ENCODE measurements at regions of chr6 and their contacts with region 1.

Region 1: GRCh38 chr6:24774696-24775519 is at the start of gene GMNN:
- DNase-seq: peak; percentile 94
- H3K4me3 ChIP-seq: peak within 1 kb of the TSS; percentile 41 to 99 (median 82)
- H3K27ac ChIP-seq: peak within 1 kb of the TSS; percentile 54
- H3K4me1 ChIP-seq: peaks cover 23% of the 10 kb centered on the region
- H3K27me3 ChIP-seq: no peaks in the 10 kb centered on the region
- CTCF ChIP-seq: no peak
- POLR2A ChIP-seq: peak; percentile 85
- total RNA-seq, gene GMNN: 51.9 and 52.6 TPM in 2 replicates

Region 2: GRCh38 chr6:24504602-24505586 is 270.0 kb before region 1 on chr6:
- CTCF ChIA-PET with region 1: no interaction called
- POLR2A ChIA-PET with region 1: no interaction called
- dilution Hi-C with region 1: no loop called
- intact Hi-C with region 1: no loop called
- DNase-seq: no peak
- H3K4me3 ChIP-seq: no peak overlapping the region
- H3K27ac ChIP-seq: no peak overlapping the region
- H3K4me1 ChIP-seq: no peaks in the 10 kb centered on the region
- H3K27me3 ChIP-seq: peaks cover 0 to 2% of the 10 kb centered on the region in 2 experiments
- CTCF ChIP-seq: no peak
- POLR2A ChIP-seq: no peak

Region 3: DNA sequence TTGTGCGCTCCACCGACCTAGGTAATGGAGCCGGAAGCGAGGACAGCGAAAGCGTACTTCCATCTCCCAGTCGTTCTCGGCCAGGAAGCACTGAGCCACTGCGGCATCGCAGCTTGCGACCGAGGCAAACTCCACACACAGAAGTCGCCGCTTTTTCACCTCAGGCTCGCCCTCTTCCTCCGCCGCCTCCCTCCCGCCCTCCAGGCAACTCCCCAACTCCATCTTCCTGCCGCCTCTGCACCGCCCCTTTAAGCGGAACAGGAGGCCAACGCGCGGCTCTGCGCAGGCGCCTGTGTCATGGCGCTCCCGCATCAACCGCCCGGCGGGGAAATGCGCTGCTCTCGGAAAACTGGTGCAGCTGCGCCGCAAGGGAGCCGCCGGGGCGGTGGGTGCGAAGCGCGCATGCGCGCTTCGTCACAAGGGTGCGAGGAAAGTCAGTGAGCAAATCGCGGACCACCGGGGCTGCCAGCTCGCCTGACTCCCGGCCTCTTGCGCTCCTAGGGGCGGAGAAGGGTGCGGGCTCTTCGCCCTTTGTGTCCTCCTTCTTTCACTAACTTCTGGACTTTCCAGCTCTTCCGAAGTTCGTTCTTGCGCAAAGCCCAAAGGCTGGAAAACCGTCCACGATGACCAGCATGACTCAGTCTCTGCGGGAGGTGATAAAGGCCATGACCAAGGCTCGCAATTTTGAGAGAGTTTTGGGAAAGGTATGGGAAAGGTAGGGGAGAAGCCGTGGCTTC is 108.1 kb before region 1 on chr6 and contains the starts of genes ACOT13 and TDP2:
- CTCF ChIA-PET with region 1: no interaction called
- POLR2A ChIA-PET with region 1: no interaction called
- dilution Hi-C with region 1: no loop called
- intact Hi-C with region 1: loop called (anchors 1 kb)
- DNase-seq: peak; percentile 98
- H3K4me3 ChIP-seq: peak within 1 kb of the TSS; percentile 71 to 92 (median 90)
- H3K27ac ChIP-seq: peak within 1 kb of the TSS; percentile 75
- H3K4me1 ChIP-seq: peaks cover 13% of the 10 kb centered on the region
- H3K27me3 ChIP-seq: no peaks in the 10 kb centered on the region
- CTCF ChIP-seq: peak; percentile 34 to 68
- POLR2A ChIP-seq: peak; percentile 83
- total RNA-seq, gene ACOT13: 15.3 and 24.1 TPM in 2 replicates
- total RNA-seq, gene TDP2: 35.3 and 39.2 TPM in 2 replicates

Region 4: DNA sequence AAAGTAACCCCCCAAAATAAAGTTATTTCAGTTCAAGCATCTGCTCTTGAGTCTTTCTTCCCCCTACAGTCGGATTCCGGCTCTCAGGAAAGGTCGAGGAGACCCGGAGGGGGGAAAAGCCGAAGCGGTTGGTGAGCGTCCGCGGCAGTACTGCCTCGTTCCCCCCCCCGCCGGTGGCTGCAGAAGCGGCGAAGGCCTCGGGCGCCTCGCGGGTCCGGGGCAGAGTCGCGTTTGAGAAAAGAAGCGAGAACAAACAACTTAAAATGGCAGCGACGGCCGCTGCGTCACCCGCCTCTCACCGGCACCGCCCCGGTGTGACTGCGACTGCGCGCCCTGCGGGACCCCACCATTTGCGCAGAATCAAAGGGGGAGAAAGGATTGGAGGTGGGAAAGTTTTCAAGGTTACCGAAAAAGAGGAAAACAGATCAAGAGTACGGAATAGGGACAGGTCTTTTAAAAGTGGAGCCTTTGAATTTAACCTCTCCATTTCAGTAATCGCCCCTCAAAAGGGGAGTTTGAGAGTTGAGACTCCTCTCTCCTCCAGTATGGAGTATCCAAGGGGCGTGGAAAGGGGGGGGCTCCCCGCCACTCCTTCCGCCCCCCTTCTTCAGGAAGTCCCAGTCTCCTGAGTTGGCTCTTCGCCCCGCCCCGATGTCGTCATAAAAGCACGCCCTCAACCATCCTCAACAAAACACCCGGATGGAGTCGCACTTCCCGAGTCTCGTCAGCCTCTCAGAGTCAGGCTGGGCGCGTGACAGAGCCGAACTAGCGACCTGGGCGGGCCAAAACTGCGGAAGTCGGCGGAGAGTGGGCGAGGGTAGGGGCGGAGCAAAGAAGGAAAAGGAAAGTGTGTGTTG is 54.1 kb before region 1 on chr6:
- CTCF ChIA-PET with region 1: interaction called, 3 read pairs
- POLR2A ChIA-PET with region 1: no interaction called
- dilution Hi-C with region 1: no loop called
- intact Hi-C with region 1: loop called (anchors 1 kb)
- DNase-seq: peak; percentile 100
- H3K4me3 ChIP-seq: peak overlapping the region; percentile 81 to 89 (median 86)
- H3K27ac ChIP-seq: peak overlapping the region; percentile 97
- H3K4me1 ChIP-seq: peaks cover 34% of the 10 kb centered on the region
- H3K27me3 ChIP-seq: no peaks in the 10 kb centered on the region
- CTCF ChIP-seq: no peak
- POLR2A ChIP-seq: peak; percentile 98

Region 5: GRCh38 chr6:24743265-24743943 is 31.5 kb before region 1 on chr6:
- CTCF ChIA-PET with region 1: no interaction called
- POLR2A ChIA-PET with region 1: interaction called, 3 read pairs
- dilution Hi-C with region 1: no loop called
- intact Hi-C with region 1: loop called (anchors 1 kb)
- DNase-seq: peak; percentile 95
- H3K4me3 ChIP-seq: peak overlapping the region in 1 of 3 experiments; percentile 9
- H3K27ac ChIP-seq: peak overlapping the region; percentile 90
- H3K4me1 ChIP-seq: peaks cover 16% of the 10 kb centered on the region
- H3K27me3 ChIP-seq: no peaks in the 10 kb centered on the region
- CTCF ChIP-seq: no peak
- POLR2A ChIP-seq: no peak

Region 6: GRCh38 chr6:24996269-24996836 is 221.4 kb after region 1 on chr6:
- CTCF ChIA-PET with region 1: no interaction called
- POLR2A ChIA-PET with region 1: no interaction called
- dilution Hi-C with region 1: no loop called
- intact Hi-C with region 1: no loop called
- DNase-seq: no peak
- H3K4me3 ChIP-seq: no peak overlapping the region
- H3K27ac ChIP-seq: no peak overlapping the region
- H3K4me1 ChIP-seq: no peaks in the 10 kb centered on the region
- H3K27me3 ChIP-seq: no peaks in the 10 kb centered on the region
- CTCF ChIP-seq: no peak
- POLR2A ChIP-seq: no peak

Region 7: GRCh38 chr6:25085756-25086155 is 310.8 kb after region 1 on chr6:
- CTCF ChIA-PET with region 1: no interaction called
- POLR2A ChIA-PET with region 1: no interaction called
- dilution Hi-C with region 1: no loop called
- intact Hi-C with region 1: loop called (anchors 5 kb)
- DNase-seq: peak; percentile 95
- H3K4me3 ChIP-seq: no peak overlapping the region
- H3K27ac ChIP-seq: peak overlapping the region; percentile 68
- H3K4me1 ChIP-seq: peaks cover 46% of the 10 kb centered on the region
- H3K27me3 ChIP-seq: no peaks in the 10 kb centered on the region
- CTCF ChIP-seq: no peak
- POLR2A ChIP-seq: peak; percentile 65

Region 8: GRCh38 chr6:25173951-25174474 is 399.1 kb after region 1 on chr6:
- CTCF ChIA-PET with region 1: no interaction called
- POLR2A ChIA-PET with region 1: no interaction called
- dilution Hi-C with region 1: no loop called
- intact Hi-C with region 1: loop called (anchors 10 kb)
- DNase-seq: peak; percentile 93
- H3K4me3 ChIP-seq: no peak overlapping the region
- H3K27ac ChIP-seq: peak overlapping the region; percentile 38
- H3K4me1 ChIP-seq: peaks cover 37% of the 10 kb centered on the region
- H3K27me3 ChIP-seq: no peaks in the 10 kb centered on the region
- CTCF ChIP-seq: no peak
- POLR2A ChIP-seq: no peak

Measured in endothelial cell of umbilical vein (primary cell).